MCF 10A (cell line): ENCODE measurements at regions of chr5 and their contacts with region 1.

Region 1: GRCh38 chr5:125412561-125413495 is 666.4 kb upstream of the ZNF608 start:
- DNase-seq: peak; percentile 75
- H3K4me3 Mint-ChIP-seq: peak overlapping the region; percentile 44
- H3K27ac Mint-ChIP-seq: peak overlapping the region; percentile 91
- H3K4me1 Mint-ChIP-seq: peaks cover 52% of the 10 kb centered on the region
- H3K27me3 Mint-ChIP-seq: no peaks in the 10 kb centered on the region
- CTCF ChIP-seq: peak; percentile 34

Region 2: GRCh38 chr5:123937230-123937629 is 1475.6 kb before region 1 on chr5:
- CTCF ChIA-PET with region 1: no interaction called
- POLR2A ChIA-PET with region 1: no interaction called
- intact Hi-C with region 1: loop called (anchors 2 kb)
- DNase-seq: peak; percentile 85
- H3K4me3 Mint-ChIP-seq: no peak overlapping the region
- H3K27ac Mint-ChIP-seq: no peak overlapping the region
- H3K4me1 Mint-ChIP-seq: peaks cover 7% of the 10 kb centered on the region
- H3K27me3 Mint-ChIP-seq: no peaks in the 10 kb centered on the region
- CTCF ChIP-seq: peak; percentile 86

Region 3: GRCh38 chr5:124741711-124742496 is 670.9 kb before region 1 on chr5:
- CTCF ChIA-PET with region 1: no interaction called
- POLR2A ChIA-PET with region 1: interaction called, 60 read pairs
- intact Hi-C with region 1: loop called (anchors 1 kb)
- DNase-seq: peak; percentile 95
- H3K4me3 Mint-ChIP-seq: no peak overlapping the region
- H3K27ac Mint-ChIP-seq: no peak overlapping the region
- H3K4me1 Mint-ChIP-seq: peaks cover 12% of the 10 kb centered on the region
- H3K27me3 Mint-ChIP-seq: no peaks in the 10 kb centered on the region
- CTCF ChIP-seq: no peak

Region 4: GRCh38 chr5:124902097-124902821 is 510.6 kb before region 1 on chr5:
- CTCF ChIA-PET with region 1: no interaction called
- POLR2A ChIA-PET with region 1: interaction called, 3 read pairs
- intact Hi-C with region 1: loop called (anchors 5 kb)
- DNase-seq: no peak
- H3K4me3 Mint-ChIP-seq: no peak overlapping the region
- H3K27ac Mint-ChIP-seq: no peak overlapping the region
- H3K4me1 Mint-ChIP-seq: peaks cover 11% of the 10 kb centered on the region
- H3K27me3 Mint-ChIP-seq: no peaks in the 10 kb centered on the region
- CTCF ChIP-seq: no peak

Region 5: DNA sequence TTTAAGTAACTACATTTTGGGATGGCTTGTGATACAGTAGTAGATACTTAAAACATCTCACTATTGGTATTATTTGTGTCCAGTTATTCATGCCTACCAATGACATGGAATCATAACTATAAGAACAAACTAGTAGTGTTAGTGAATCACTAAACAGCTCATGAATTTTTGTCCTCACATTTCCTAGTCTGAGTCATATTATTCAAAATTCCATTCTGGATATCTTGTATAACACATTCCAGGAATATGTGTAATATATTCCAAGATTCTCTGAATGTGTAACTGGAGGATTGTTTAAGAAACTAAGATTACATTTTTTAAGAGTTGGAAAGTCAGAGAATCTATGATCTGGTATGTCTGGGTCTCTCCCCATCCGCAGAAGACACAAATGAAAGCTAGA is 101.1 kb before region 1 on chr5:
- CTCF ChIA-PET with region 1: no interaction called
- POLR2A ChIA-PET with region 1: interaction called, 19 read pairs
- intact Hi-C with region 1: no loop called
- DNase-seq: peak; percentile 70
- H3K4me3 Mint-ChIP-seq: no peak overlapping the region
- H3K27ac Mint-ChIP-seq: peak overlapping the region; percentile 33
- H3K4me1 Mint-ChIP-seq: peaks cover 18% of the 10 kb centered on the region
- H3K27me3 Mint-ChIP-seq: no peaks in the 10 kb centered on the region
- CTCF ChIP-seq: no peak

Region 6: GRCh38 chr5:125756456-125756855 is 343.6 kb after region 1 on chr5:
- CTCF ChIA-PET with region 1: no interaction called
- POLR2A ChIA-PET with region 1: no interaction called
- intact Hi-C with region 1: loop called (anchors 10 kb)
- DNase-seq: peak; percentile 62
- H3K4me3 Mint-ChIP-seq: no peak overlapping the region
- H3K27ac Mint-ChIP-seq: no peak overlapping the region
- H3K4me1 Mint-ChIP-seq: peaks cover 10% of the 10 kb centered on the region
- H3K27me3 Mint-ChIP-seq: no peaks in the 10 kb centered on the region
- CTCF ChIP-seq: no peak